Naive thymus-derived CD4-positive, alpha-beta T cell (primary cell): ENCODE measurements at regions of chr5 and their contacts with region 1.

Region 1: DNA sequence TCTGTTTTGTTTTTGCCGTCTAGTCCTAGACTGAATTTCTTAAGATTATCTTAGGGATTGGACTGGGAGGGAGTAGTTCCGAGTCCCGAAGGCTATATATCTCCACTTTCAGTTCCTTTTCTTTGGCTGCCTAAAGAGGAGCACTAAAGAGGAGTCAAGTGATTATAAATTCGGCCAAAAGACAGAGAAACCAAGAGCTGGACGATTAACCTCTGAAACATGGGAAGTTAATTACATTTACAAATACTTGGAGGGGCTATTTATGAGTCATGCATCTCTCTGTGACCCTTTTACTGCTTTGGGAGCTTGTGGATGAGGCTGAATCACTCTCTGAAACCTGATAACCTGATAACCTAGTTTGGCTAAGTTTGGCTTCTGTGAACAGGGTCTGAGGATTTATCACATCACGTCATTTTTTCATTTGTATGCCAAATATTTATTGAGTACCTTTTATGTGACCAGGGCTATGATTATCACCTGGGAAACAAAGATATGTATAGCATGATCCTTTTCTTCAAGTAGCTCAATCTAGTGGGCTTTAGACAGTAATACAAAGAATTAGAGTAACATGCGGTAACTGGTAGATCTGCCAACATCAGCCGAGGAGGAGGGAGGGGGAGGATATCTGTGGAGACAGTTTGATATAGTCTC is 180.9 kb downstream of the CD180 start:
- DNase-seq: no peak
- ATAC-seq: no peak
- H3K4me3 ChIP-seq: no peak overlapping the region
- H3K4me3 Mint-ChIP-seq: no peak overlapping the region
- H3K27ac ChIP-seq: no peak overlapping the region
- H3K27ac Mint-ChIP-seq: no peak overlapping the region
- H3K4me1 ChIP-seq: peaks cover 0 to 8% of the 10 kb centered on the region in 2 donors
- H3K4me1 Mint-ChIP-seq: peaks cover 32 to 75% (median 50%) of the 10 kb centered on the region in 7 donors
- H3K27me3 ChIP-seq: no peaks in the 10 kb centered on the region
- H3K27me3 Mint-ChIP-seq: no peaks in the 10 kb centered on the region

Region 2: DNA sequence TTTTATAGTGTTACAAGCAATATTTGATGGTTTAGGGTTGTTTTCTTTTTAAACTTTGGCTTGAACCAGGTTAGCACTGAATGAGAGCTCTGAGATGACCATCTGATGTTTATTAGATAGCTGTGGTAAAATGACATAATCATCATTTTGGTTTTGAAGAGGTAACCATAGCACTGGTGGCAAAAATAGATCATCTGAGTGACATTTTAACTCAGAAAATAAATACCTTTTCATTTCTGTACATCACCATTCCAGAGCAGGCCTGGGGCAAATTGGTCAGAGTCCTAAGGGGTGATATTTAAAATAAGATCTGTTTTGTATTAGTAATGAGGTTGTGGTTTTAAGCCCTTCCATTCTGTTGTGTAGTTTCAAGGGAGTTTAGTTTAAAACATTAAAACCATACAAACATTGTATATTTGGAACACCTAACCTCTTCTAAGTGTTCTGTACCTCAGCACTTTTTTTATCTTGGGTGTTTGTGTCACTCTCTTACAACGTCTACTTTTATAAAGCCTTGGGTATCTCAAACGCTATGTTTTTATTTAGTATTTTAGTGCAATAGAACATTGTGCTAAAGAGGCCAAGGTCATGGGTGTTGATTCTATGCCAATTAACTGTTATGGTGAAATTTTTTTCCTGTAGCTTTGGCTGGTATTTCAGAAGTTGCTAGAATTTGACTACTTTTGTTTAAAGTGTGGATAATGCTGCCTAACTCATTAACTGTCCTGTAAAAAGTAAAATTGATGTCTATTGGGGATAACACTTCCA is 14.8 kb after region 1 on chr5:
- CTCF ChIA-PET with region 1: no interaction called
- POLR2A ChIA-PET with region 1: no interaction called
- intact Hi-C with region 1: loop called in 1 of 2 experiments (anchors 2 kb)
- DNase-seq: no peak
- ATAC-seq: no peak
- H3K4me3 ChIP-seq: no peak overlapping the region
- H3K4me3 Mint-ChIP-seq: no peak overlapping the region
- H3K27ac ChIP-seq: no peak overlapping the region
- H3K27ac Mint-ChIP-seq: peak overlapping the region in 2 of 9 donors; percentile 2 to 37
- H3K4me1 ChIP-seq: no peaks in the 10 kb centered on the region
- H3K4me1 Mint-ChIP-seq: peaks cover 16 to 80% (median 63%) of the 10 kb centered on the region in 7 donors
- H3K27me3 ChIP-seq: peaks cover 0 to 3% of the 10 kb centered on the region in 2 donors
- H3K27me3 Mint-ChIP-seq: no peaks in the 10 kb centered on the region

Region 3: DNA sequence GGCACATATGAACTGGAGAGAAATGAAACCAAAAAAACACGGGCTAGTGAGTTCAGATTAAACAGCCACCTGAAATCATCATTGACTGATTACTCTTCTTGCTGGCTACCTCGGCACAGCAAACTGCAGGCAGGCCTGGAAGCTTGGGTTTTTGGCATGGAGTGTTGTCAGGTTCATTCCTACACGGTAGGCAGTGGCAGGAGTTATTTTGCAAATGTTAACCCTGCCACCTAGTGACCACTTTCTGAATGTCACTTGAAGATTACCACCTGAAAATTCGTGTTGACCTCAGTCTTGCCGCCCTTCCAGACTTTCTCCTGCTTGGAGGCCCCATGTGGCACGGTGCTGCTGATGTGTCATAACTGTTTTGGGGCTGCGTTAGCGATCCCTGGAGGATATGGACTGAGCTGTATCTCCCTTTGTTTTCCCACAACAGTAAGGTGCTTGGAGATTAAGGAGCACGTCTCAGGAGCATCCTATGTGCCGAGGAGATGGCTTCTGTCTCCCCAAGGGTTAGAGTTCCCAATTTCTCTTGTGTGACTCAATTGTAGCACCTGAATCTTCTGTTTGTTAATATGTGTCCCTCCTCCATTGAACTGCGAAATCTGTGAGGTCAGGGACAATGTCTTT is 193.6 kb after region 1 on chr5:
- CTCF ChIA-PET with region 1: no interaction called
- POLR2A ChIA-PET with region 1: no interaction called
- intact Hi-C with region 1: no loop called
- DNase-seq: peak; percentile 33 to 77 (median 69)
- ATAC-seq: peak; percentile 74
- H3K4me3 ChIP-seq: peak overlapping the region; percentile 14
- H3K4me3 Mint-ChIP-seq: peak overlapping the region in 5 of 10 donors; percentile 47 to 55 (median 50)
- H3K27ac ChIP-seq: peak overlapping the region; percentile 0
- H3K27ac Mint-ChIP-seq: peak overlapping the region; percentile 78 to 98 (median 85)
- H3K4me1 ChIP-seq: peaks cover 50 to 54% of the 10 kb centered on the region in 2 donors
- H3K4me1 Mint-ChIP-seq: peaks cover 39 to 71% (median 66%) of the 10 kb centered on the region in 7 donors
- H3K27me3 ChIP-seq: no peaks in the 10 kb centered on the region
- H3K27me3 Mint-ChIP-seq: peaks cover 0 to 2% (median 0%) of the 10 kb centered on the region in 5 donors